Endothelial cell of umbilical vein (primary cell): ENCODE measurements at regions of chr20 and their contacts with region 1.

Region 1: DNA sequence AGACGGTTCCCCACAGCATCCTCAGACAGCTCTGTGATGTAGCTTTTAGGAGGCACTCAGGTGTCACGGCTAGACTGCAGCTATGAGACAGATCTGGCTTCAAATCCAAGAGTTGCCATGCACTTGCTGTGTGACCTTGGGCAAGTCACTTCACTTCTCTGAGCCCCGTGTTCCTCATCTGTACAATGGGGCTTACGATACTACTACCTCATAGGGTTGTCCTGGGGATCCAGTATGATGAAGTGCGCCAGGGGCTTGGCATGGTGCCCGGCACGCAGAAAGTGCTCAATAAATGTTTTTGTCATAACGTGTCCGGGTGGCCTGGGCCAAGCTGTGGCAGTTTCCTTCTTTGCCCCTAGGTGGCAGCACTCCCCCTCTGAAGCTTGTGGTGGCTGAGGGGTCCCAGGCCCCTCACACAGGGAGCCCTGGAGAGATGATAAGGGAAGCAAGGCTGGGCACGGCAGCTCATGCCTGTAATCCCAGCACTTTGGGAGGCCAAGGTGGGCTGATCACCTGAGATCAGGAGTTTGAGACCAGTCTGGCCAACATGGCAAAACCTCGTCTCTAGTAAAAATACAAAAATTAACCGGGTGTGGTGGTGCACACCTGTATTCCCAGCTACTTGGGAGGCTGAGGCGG is 19.1 kb upstream of the CHMP4B start:
- DNase-seq: peak; percentile 61
- H3K4me3 ChIP-seq: no peak overlapping the region
- H3K27ac ChIP-seq: no peak overlapping the region
- H3K4me1 ChIP-seq: peaks cover 44% of the 10 kb centered on the region
- H3K27me3 ChIP-seq: no peaks in the 10 kb centered on the region
- CTCF ChIP-seq: peak; percentile 79 to 80
- POLR2A ChIP-seq: no peak

Region 2: DNA sequence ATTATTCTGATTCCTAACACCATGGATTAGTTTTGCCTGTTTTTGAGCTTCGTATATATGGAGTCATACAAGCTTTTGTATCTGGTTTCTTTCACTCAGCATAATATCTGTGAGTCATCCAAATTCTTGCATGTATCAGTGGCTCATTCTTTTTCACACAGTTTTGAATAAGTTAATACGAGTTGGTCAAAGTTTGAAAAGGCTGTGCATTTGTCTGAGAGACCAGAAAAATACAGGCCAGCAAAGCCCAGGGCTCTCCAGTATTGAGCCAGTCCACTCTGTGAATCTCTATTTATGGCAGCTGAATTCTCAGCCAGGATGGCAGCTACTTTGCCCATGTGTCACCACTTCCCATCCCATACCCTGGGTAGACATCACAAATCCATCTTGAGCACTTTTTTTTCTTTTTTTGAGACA is 11.9 kb after region 1 on chr20:
- CTCF ChIA-PET with region 1: interaction called, 19 read pairs
- POLR2A ChIA-PET with region 1: no interaction called
- dilution Hi-C with region 1: no loop called
- intact Hi-C with region 1: no loop called
- DNase-seq: peak; percentile 38
- H3K4me3 ChIP-seq: no peak overlapping the region
- H3K27ac ChIP-seq: peak overlapping the region; percentile 13
- H3K4me1 ChIP-seq: peaks cover 9% of the 10 kb centered on the region
- H3K27me3 ChIP-seq: no peaks in the 10 kb centered on the region
- CTCF ChIP-seq: no peak
- POLR2A ChIP-seq: no peak

Region 3: GRCh38 chr20:33915726-33916331 is 123.8 kb after region 1 on chr20:
- CTCF ChIA-PET with region 1: interaction called, 5 read pairs
- POLR2A ChIA-PET with region 1: no interaction called
- dilution Hi-C with region 1: no loop called
- intact Hi-C with region 1: loop called (anchors 1 kb)
- DNase-seq: no peak
- H3K4me3 ChIP-seq: no peak overlapping the region
- H3K27ac ChIP-seq: no peak overlapping the region
- H3K4me1 ChIP-seq: peaks cover 16% of the 10 kb centered on the region
- H3K27me3 ChIP-seq: peaks cover 0 to 2% of the 10 kb centered on the region in 2 experiments
- CTCF ChIP-seq: peak; percentile 47 to 55
- POLR2A ChIP-seq: no peak

Region 4: GRCh38 chr20:34069341-34070078 is 277.4 kb after region 1 on chr20:
- CTCF ChIA-PET with region 1: interaction called, 9 read pairs
- POLR2A ChIA-PET with region 1: no interaction called
- dilution Hi-C with region 1: no loop called
- intact Hi-C with region 1: loop called (anchors 1 kb)
- DNase-seq: peak; percentile 90
- H3K4me3 ChIP-seq: no peak overlapping the region
- H3K27ac ChIP-seq: no peak overlapping the region
- H3K4me1 ChIP-seq: no peaks in the 10 kb centered on the region
- H3K27me3 ChIP-seq: no peaks in the 10 kb centered on the region
- CTCF ChIP-seq: peak; percentile 64 to 93
- POLR2A ChIP-seq: no peak